ENCODE measurements at regions of chr19 and their contacts with region 1.

Region 1: DNA sequence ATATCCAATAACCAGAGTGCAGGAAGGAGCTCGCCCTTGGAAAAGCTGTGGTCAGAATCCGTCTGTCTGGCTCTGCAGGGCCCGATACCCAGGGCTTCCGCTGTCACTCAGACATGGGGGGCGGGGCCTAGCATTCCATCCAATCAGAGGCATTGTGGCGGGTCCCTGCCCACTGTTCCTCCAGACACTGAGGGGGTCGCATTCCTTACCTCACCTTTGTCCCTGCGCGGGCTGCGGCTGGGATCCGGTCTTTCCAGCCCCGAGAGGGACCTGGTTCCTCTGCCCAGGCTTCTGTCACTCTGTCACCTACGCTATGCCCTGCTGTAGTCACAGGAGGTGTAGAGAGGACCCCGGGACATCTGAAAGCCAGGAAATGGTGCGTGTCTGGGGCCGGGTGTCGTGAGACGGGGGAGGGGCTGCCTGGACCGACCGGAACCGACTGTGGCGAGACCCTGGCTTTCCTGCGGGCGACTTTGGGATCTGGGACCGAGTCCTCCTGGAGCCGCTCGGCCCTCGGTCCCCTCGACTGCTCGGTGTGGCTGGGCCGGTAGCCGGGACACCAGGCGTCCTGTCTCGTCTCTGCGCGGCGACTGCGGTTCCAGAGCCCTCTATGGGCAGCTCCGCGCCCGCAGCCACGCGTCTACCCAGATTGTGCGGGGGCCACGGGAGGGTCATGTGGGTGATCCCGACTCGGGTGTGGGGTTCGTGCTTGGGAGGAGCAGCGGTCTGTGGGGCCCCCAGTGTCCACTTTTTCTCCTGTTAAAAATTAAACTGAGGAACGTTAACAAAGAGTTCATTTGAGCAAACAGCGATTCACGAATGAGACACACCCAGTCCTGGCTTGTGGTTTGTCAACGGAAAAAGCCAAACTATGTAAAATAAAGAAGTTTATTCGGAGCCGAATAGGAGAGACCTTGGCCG is at the start of gene ZNF69:
- DNase-seq: peak; percentile 69 to 90
- H3K4me3 ChIP-seq: peak within 1 kb of the TSS; percentile 56
- H3K27ac ChIP-seq: no peak within 1 kb of the TSS
- H3K4me1 ChIP-seq: peaks cover 8% of the 10 kb centered on the region; the same call in 1 of the 2 replicates
- H3K27me3 ChIP-seq: peaks cover 8% of the 10 kb centered on the region; the same call in 1 of the 2 replicates
- CTCF ChIP-seq: no peak; the same call in 1 of the 2 replicates
- total RNA-seq, gene ZNF69: 3.3 and 4.4 TPM in 2 replicates

Region 2: DNA sequence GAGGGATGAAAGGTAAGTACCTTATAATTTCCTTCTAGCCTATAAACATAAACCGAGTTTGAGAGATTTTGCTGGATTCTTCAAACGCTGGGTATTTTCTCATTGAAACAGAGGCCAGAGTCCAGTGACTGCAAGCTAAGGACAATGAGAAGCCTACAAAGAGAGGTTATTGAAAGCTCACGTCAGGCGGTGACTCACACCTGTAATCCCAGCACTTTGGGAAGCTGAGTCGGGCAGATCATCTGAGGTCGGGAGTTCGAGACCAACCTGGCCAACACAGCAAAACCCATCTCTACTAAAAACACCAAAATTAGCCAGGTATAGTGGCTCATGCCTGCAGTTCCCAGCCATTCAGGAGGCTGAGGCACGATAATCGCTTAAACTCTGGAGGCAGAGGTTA is 15.2 kb before region 1 on chr19:
- CTCF ChIA-PET with region 1: no interaction called
- POLR2A ChIA-PET with region 1: no interaction called
- intact Hi-C with region 1: no loop called
- DNase-seq: no peak
- H3K4me3 ChIP-seq: no peak overlapping the region
- H3K27ac ChIP-seq: no peak overlapping the region
- H3K4me1 ChIP-seq: no peaks in the 10 kb centered on the region
- H3K27me3 ChIP-seq: peaks cover 22% of the 10 kb centered on the region
- CTCF ChIP-seq: no peak

Region 3: DNA sequence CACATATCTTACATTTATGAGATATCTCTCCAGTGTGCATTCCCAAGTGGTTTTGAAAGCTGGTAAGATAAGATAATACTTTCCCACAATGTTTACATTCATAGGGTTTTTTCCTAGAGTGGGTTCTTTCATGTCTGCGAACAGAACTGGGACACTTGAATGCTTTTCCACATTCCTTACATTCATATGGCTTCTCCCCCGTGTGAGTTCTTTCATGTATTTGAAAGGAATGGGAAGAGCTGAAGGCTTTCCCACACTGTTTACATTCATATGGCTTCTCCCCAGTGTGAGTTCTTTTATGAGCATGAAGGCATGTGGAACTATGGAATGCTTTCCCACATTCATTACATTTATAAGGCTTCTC is 127.9 kb after region 1 on chr19:
- CTCF ChIA-PET with region 1: interaction called, 14 read pairs
- POLR2A ChIA-PET with region 1: no interaction called
- intact Hi-C with region 1: no loop called
- DNase-seq: no peak
- H3K4me3 ChIP-seq: no peak overlapping the region
- H3K27ac ChIP-seq: no peak overlapping the region
- H3K4me1 ChIP-seq: no peaks in the 10 kb centered on the region
- H3K27me3 ChIP-seq: no peaks in the 10 kb centered on the region
- CTCF ChIP-seq: no peak

Region 4: GRCh38 chr19:12946092-12946721 is 1058.3 kb after region 1 on chr19:
- CTCF ChIA-PET with region 1: no interaction called
- POLR2A ChIA-PET with region 1: interaction called, 19 read pairs
- intact Hi-C with region 1: no loop called
- DNase-seq: peak; percentile 70 to 73
- H3K4me3 ChIP-seq: peak overlapping the region; percentile 77
- H3K27ac ChIP-seq: peak overlapping the region; percentile 89
- H3K4me1 ChIP-seq: peaks cover 23% of the 10 kb centered on the region
- H3K27me3 ChIP-seq: no peaks in the 10 kb centered on the region
- CTCF ChIP-seq: no peak